Stomach (tissue), 19 donors: ENCODE measurements at regions of chr4 and their contacts with region 1.

Region 1: GRCh38 chr4:53196882-53197771 is 168.7 kb downstream of the SCFD2 start:
- DNase-seq: peak in 1 of 2 donors; percentile 90
- H3K4me3 ChIP-seq: no peak overlapping the region
- H3K27ac ChIP-seq: no peak overlapping the region
- H3K4me1 ChIP-seq: peaks cover 0 to 5% (median 0%) of the 10 kb centered on the region in 4 donors
- H3K27me3 ChIP-seq: no peaks in the 10 kb centered on the region
- CTCF ChIP-seq: peak in 5 of 7 experiments; percentile 41 to 77 (median 62)
- EP300 ChIP-seq: no peak
- POLR2A ChIP-seq: no peak

Region 2: GRCh38 chr4:54217642-54218495 is 1020.7 kb after region 1 on chr4:
- intact Hi-C with region 1: loop called (anchors 5 kb)
- DNase-seq: peak; percentile 74 to 95
- H3K4me3 ChIP-seq: peak overlapping the region; percentile 28 to 36 (median 29)
- H3K27ac ChIP-seq: peak overlapping the region in 1 of 5 donors; percentile 42
- H3K4me1 ChIP-seq: peaks cover 7 to 18% (median 13%) of the 10 kb centered on the region in 4 donors
- H3K27me3 ChIP-seq: peaks cover 0 to 35% (median 10%) of the 10 kb centered on the region in 3 donors
- CTCF ChIP-seq: peak in 5 of 7 experiments; percentile 73 to 91 (median 89)
- EP300 ChIP-seq: no peak
- POLR2A ChIP-seq: no peak

Region 3: GRCh38 chr4:54234497-54235207 is 1037.5 kb after region 1 on chr4:
- intact Hi-C with region 1: loop called (anchors 5 kb)
- DNase-seq: peak in 1 of 2 donors; percentile 21
- H3K4me3 ChIP-seq: peak overlapping the region; percentile 50 to 66 (median 53)
- H3K27ac ChIP-seq: peak overlapping the region in 2 of 5 donors; percentile 68 to 80
- H3K4me1 ChIP-seq: peaks cover 43 to 53% (median 49%) of the 10 kb centered on the region in 4 donors
- H3K27me3 ChIP-seq: peaks cover 19 to 64% (median 42%) of the 10 kb centered on the region in 3 donors
- CTCF ChIP-seq: peak in 1 of 7 experiments; percentile 4
- EP300 ChIP-seq: no peak
- POLR2A ChIP-seq: no peak